ENCODE measurements at regions of chr17 and their contacts with region 1.

Region 1: GRCh38 chr17:69898601-69899000 is 176.4 kb upstream of the KCNJ16 start:
- DNase-seq: no peak
- H3K4me3 ChIP-seq: no peak overlapping the region
- H3K4me3 Mint-ChIP-seq: no peak overlapping the region
- H3K27ac Mint-ChIP-seq: peak overlapping the region; percentile 2
- H3K4me1 ChIP-seq: peaks cover 41% of the 10 kb centered on the region
- H3K4me1 Mint-ChIP-seq: peaks cover 32% of the 10 kb centered on the region
- H3K27me3 ChIP-seq: no peaks in the 10 kb centered on the region
- H3K27me3 Mint-ChIP-seq: no peaks in the 10 kb centered on the region
- CTCF ChIP-seq: no peak

Region 2: DNA sequence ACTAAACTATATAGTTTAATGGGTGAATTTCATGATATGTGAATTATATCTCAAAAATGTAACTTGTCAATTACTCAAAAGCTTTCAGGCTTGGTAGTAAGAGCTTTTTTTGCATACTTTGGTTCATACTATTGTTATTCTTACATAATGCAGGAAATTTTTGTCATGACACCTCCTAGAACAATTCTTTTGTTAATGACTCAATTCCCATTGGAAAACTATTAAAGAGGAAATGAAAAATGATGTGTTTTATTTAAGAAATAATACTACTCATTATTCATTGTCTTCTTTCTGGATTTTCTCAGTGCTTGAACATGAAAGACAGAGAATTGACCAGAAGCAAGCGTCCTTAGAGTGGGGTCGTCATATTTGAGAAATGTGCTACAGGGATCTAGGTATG is 19.9 kb before region 1 on chr17:
- CTCF ChIA-PET with region 1: no interaction called
- POLR2A ChIA-PET with region 1: no interaction called
- intact Hi-C with region 1: no loop called
- DNase-seq: no peak
- H3K4me3 ChIP-seq: no peak overlapping the region
- H3K4me3 Mint-ChIP-seq: no peak overlapping the region
- H3K27ac Mint-ChIP-seq: no peak overlapping the region
- H3K4me1 ChIP-seq: no peaks in the 10 kb centered on the region
- H3K4me1 Mint-ChIP-seq: no peaks in the 10 kb centered on the region
- H3K27me3 ChIP-seq: no peaks in the 10 kb centered on the region
- H3K27me3 Mint-ChIP-seq: no peaks in the 10 kb centered on the region
- CTCF ChIP-seq: no peak

Region 3: DNA sequence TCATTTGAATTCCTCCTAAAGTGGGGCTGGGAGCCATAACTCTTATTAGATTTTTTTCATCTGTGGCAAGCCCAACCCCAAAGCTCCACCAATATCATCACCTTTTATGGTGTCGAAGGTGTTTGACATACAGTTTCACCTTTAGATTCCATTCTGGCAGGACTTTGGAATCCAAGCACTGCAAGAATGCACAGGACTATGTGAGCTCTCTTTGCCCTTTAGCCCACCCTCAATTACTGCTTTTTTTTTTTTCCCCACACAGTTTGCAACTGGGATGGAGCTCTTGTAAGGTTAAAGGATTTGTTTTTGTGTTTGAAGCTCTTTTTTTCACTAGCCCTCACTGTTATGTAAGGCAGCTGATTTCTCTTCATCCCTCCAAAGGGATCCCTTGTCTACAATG is 22.5 kb after region 1 on chr17:
- CTCF ChIA-PET with region 1: interaction called, 3 read pairs
- POLR2A ChIA-PET with region 1: no interaction called
- intact Hi-C with region 1: loop called (anchors 1 kb)
- DNase-seq: peak; percentile 58 to 68
- H3K4me3 ChIP-seq: no peak overlapping the region
- H3K4me3 Mint-ChIP-seq: peak overlapping the region; percentile 31
- H3K27ac Mint-ChIP-seq: peak overlapping the region; percentile 42
- H3K4me1 ChIP-seq: peaks cover 25% of the 10 kb centered on the region
- H3K4me1 Mint-ChIP-seq: peaks cover 32% of the 10 kb centered on the region
- H3K27me3 ChIP-seq: no peaks in the 10 kb centered on the region
- H3K27me3 Mint-ChIP-seq: no peaks in the 10 kb centered on the region
- CTCF ChIP-seq: no peak